ENCODE measurements at regions of chr17 and their contacts with region 1.

Region 1: DNA sequence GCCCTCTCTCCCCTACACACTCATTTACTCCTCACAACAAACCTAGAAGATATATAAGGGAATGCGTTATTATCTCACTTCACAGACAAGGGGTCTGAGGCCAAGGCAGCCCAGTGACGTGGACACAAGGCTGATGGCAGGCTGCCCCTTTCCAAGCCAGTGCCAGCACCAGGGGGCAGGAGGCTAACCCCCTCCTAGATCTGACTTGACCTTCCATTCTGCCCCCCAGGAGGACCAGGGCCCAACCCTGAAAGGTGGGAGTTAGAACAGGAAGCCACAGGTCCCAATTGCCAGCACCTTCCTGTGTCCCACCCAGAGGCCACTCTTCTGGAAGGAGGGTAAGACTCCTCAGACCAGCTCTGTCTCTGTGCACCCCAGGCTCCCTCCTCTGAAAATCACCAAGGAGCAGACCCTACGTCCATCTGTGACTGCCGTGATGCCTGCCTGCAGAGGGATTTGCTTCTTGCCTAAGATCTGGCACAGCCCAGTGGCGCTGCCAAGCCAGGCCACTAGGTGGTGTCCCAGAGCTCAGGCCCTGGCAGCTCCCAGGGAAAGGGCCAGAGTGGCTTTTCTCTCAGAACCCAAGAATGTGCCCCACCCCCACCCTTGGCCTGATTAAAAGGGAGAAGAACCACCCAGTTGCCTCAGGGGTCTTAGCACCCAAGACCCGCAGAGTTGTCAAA is 42.4 kb upstream of the MRPS23 start:
- DNase-seq: peak; percentile 84
- ATAC-seq: peak; percentile 84
- H3K4me3 ChIP-seq: peak overlapping the region; percentile 64 to 83 (median 68); a peak in 5 of 6 replicates
- H3K27ac ChIP-seq: peak overlapping the region; percentile 93
- H3K4me1 ChIP-seq: peaks cover 60% of the 10 kb centered on the region
- H3K27me3 ChIP-seq: no peaks in the 10 kb centered on the region; a peak in 1 of 5 replicates
- CTCF ChIP-seq: peak; percentile 99
- EP300 ChIP-seq: peak in 1 of 2 experiments; percentile 35; a peak in 1 of 4 replicates
- POLR2A ChIP-seq: no peak
- RAD21 ChIP-seq: peak; percentile 96

Region 2: DNA sequence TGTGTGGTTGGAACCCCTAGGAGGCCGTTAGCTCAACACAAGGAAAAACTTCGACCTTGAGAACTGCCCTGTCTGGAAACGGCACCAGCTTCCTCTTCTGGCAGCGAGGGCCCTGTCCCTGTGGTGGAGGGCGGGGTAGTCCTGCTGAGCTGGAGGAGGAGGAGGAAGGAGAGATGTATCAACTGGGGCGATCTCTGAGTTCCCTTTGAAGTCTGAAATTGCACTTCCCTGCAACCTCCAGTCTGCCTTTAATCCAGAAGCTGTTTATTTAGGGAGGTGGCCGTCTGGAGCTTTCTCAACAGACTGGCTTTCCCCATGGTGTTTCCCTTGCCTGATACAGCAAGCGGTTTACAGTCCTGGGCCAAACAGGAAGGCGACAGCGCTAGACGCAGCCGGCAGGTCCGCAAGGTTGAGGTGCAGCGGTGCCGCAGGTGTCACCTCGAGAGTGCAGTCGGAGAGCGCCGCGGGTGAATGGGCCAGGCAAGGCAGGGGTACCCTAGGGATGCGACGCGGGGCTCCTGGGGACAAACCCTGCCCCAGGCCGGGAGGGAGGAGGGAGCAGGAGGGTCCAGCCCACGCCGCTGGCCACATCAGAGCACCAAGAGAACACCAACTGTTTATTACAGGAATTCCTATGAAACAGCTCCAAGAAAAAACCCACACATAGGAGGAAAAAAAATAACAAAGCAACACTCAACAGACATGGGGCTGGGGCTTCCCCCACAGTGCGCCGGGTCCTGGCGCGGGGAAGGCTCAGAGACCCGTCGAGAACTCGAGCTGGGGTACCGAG is 31.1 kb before region 1 on chr17:
- CTCF ChIA-PET with region 1: interaction called, 3 read pairs
- POLR2A ChIA-PET with region 1: interaction called, 42 read pairs
- in situ Hi-C with region 1: no loop called
- intact Hi-C with region 1: no loop called
- DNase-seq: peak; percentile 94
- ATAC-seq: peak; percentile 56
- H3K4me3 ChIP-seq: peak overlapping the region; percentile 71 to 90 (median 81)
- H3K27ac ChIP-seq: peak overlapping the region; percentile 77
- H3K4me1 ChIP-seq: peaks cover 68% of the 10 kb centered on the region
- H3K27me3 ChIP-seq: no peaks in the 10 kb centered on the region; a peak in 1 of 5 replicates
- CTCF ChIP-seq: peak; percentile 26; the same call in 1 of the 2 replicates
- EP300 ChIP-seq: peak in 1 of 2 experiments; percentile 90; a peak in 2 of 4 replicates
- POLR2A ChIP-seq: peak; percentile 46 to 72; a peak in 2 of 4 replicates
- RAD21 ChIP-seq: no peak

Region 3: DNA sequence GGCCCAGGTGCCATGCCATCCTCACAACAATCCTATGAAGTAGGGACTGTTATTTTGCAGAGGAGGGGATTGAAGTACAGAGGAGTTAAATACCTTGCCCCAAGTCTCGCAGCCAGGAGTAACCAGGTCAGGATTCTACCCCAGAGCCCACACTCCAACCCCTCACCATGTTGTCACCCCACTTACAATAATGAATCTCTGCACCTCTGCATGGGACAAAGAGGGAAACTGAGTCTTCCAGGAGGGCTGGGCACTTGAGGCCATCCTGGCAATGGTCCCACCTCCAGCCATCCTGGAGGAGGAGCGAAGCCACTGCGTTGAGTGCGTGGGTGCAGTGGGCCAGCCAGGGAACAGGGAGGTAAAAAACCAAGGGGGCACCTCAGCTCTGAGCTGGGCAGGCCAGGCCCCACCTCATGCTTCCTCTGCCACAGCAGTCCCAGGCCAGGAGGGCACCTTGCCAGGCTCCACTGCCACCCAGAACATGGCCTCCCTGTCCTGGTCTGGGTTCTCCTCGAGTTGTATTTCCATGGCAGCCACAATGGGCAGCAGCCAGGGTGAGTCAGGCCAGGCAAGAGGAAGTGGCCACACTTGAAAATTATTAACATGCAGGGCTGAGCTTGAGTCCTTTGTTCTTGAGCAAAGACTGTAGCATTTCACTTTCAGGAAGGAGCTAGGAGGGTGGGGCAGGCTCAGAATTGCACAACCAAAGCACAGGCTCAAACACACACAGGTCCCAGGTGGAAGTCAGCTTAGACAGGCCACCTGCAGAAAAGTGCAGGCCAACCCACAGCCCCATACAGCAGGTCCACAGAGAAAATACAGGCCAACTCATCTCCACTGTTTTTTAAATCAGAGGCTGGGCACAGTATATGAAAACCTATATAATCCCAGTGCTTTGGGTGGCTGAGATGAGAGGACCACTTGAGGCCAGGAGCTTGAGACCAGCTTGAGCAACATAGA is 10.8 kb after region 1 on chr17:
- CTCF ChIA-PET with region 1: no interaction called
- POLR2A ChIA-PET with region 1: interaction called, 87 read pairs
- in situ Hi-C with region 1: no loop called
- intact Hi-C with region 1: loop called (anchors 1 kb)
- DNase-seq: peak; percentile 97
- ATAC-seq: peak; percentile 89
- H3K4me3 ChIP-seq: peak overlapping the region in 1 of 3 experiments; percentile 39; a peak in 1 of 6 replicates
- H3K27ac ChIP-seq: peak overlapping the region; percentile 87
- H3K4me1 ChIP-seq: peaks cover 91% of the 10 kb centered on the region
- H3K27me3 ChIP-seq: no peaks in the 10 kb centered on the region
- CTCF ChIP-seq: peak; percentile 27; the same call in 1 of the 2 replicates
- EP300 ChIP-seq: peak; percentile 57 to 85; a peak in 3 of 4 replicates
- POLR2A ChIP-seq: peak; percentile 42 to 45; a peak in 1 of 4 replicates
- RAD21 ChIP-seq: no peak; the same call in 1 of the 2 replicates

Region 4: GRCh38 chr17:57946798-57947358 is 54.6 kb after region 1 on chr17:
- CTCF ChIA-PET with region 1: no interaction called
- POLR2A ChIA-PET with region 1: interaction called, 31 read pairs
- in situ Hi-C with region 1: no loop called
- intact Hi-C with region 1: no loop called
- DNase-seq: peak; percentile 80
- ATAC-seq: peak; percentile 95
- H3K4me3 ChIP-seq: peak overlapping the region; percentile 44 to 58 (median 55)
- H3K27ac ChIP-seq: peak overlapping the region; percentile 63
- H3K4me1 ChIP-seq: peaks cover 71% of the 10 kb centered on the region
- H3K27me3 ChIP-seq: no peaks in the 10 kb centered on the region
- CTCF ChIP-seq: no peak
- EP300 ChIP-seq: no peak
- POLR2A ChIP-seq: peak in 1 of 2 experiments; percentile 40; a peak in 1 of 4 replicates
- RAD21 ChIP-seq: no peak

Region 5: DNA sequence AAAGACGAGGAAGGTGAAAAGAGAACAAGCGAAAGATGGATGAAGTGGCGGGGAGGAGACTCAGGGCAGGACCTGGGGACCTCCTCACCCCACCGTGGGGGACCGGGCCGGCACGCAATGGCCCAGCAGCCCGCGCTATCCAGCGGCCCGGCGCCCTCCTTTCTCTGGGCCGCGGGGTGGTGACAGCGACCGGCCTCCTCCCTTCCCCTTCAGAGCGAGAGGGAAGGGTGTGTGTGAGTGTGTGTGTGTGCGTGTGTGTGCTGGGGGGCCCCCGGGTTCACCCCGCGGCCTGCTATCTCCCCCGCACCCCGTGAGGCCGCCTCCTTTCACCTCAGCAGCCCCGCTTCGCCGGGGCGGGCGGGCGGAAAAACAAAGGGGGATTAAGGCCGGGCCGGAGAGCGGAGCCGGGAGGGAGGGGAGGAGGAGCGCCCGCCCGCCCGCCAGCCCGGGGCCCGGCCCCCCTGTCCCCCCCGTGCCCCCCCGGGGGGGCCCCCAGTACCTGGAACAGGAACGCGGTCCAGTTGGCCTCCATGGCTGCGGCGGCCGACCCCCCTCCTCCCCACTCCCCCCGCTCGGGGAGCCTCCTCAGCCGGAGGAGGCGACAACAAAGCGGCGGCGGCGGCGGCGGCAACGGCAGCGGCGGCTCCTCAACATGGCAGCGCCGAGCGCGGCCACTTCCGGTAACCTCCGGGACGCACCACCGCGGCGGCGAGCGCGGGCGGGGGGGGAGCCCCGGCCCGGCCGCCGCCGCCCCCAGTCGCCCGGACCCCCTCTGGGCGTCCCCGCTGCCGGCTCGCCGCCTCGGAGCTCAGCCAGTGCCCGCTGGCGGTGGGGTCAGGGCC is 95.5 kb after region 1 on chr17 and contains the start of gene VEZF1:
- CTCF ChIA-PET with region 1: interaction called, 4 read pairs
- POLR2A ChIA-PET with region 1: interaction called, 37 read pairs
- in situ Hi-C with region 1: no loop called
- intact Hi-C with region 1: loop called (anchors 1 kb)
- DNase-seq: peak; percentile 68
- ATAC-seq: peak; percentile 61
- H3K4me3 ChIP-seq: peak within 1 kb of the TSS; percentile 71 to 95 (median 83)
- H3K27ac ChIP-seq: peak within 1 kb of the TSS; percentile 80
- H3K4me1 ChIP-seq: peaks cover 82% of the 10 kb centered on the region
- H3K27me3 ChIP-seq: no peaks in the 10 kb centered on the region; a peak in 1 of 5 replicates
- CTCF ChIP-seq: peak; percentile 12; the same call in 1 of the 2 replicates
- EP300 ChIP-seq: no peak; a peak in 1 of 4 replicates
- POLR2A ChIP-seq: peak in 1 of 2 experiments; percentile 27; a peak in 3 of 4 replicates
- RAD21 ChIP-seq: peak; percentile 35
- total RNA-seq, gene VEZF1: 45.9 and 48.0 TPM in 2 replicates

Region 6: GRCh38 chr17:58006924-58007780 is 114.9 kb after region 1 on chr17 and contains the start of gene SRSF1:
- CTCF ChIA-PET with region 1: no interaction called
- POLR2A ChIA-PET with region 1: interaction called, 39 read pairs
- in situ Hi-C with region 1: no loop called
- intact Hi-C with region 1: no loop called
- DNase-seq: peak; percentile 97
- ATAC-seq: peak; percentile 92
- H3K4me3 ChIP-seq: peak within 1 kb of the TSS; percentile 79 to 99 (median 92)
- H3K27ac ChIP-seq: peak within 1 kb of the TSS; percentile 99
- H3K4me1 ChIP-seq: peaks cover 55% of the 10 kb centered on the region
- H3K27me3 ChIP-seq: no peaks in the 10 kb centered on the region; a peak in 1 of 5 replicates
- CTCF ChIP-seq: no peak
- EP300 ChIP-seq: peak; percentile 16 to 62; a peak in 1 of 4 replicates
- POLR2A ChIP-seq: peak; percentile 97 to 98
- RAD21 ChIP-seq: peak; percentile 44
- total RNA-seq, gene SRSF1: 445 and 520 TPM in 2 replicates

Region 7: GRCh38 chr17:58060596-58061191 is 168.4 kb after region 1 on chr17:
- CTCF ChIA-PET with region 1: no interaction called
- POLR2A ChIA-PET with region 1: no interaction called
- in situ Hi-C with region 1: no loop called
- intact Hi-C with region 1: no loop called
- DNase-seq: no peak
- ATAC-seq: peak; percentile 54
- H3K4me3 ChIP-seq: no peak overlapping the region
- H3K27ac ChIP-seq: no peak overlapping the region
- H3K4me1 ChIP-seq: no peaks in the 10 kb centered on the region
- H3K27me3 ChIP-seq: peaks cover 5 to 58% of the 10 kb centered on the region in 2 experiments
- CTCF ChIP-seq: no peak
- EP300 ChIP-seq: no peak
- POLR2A ChIP-seq: no peak
- RAD21 ChIP-seq: no peak

Measured in HepG2 (cell line).